ENCODE measurements at regions of chr15 and their contacts with region 1.

Region 1: DNA sequence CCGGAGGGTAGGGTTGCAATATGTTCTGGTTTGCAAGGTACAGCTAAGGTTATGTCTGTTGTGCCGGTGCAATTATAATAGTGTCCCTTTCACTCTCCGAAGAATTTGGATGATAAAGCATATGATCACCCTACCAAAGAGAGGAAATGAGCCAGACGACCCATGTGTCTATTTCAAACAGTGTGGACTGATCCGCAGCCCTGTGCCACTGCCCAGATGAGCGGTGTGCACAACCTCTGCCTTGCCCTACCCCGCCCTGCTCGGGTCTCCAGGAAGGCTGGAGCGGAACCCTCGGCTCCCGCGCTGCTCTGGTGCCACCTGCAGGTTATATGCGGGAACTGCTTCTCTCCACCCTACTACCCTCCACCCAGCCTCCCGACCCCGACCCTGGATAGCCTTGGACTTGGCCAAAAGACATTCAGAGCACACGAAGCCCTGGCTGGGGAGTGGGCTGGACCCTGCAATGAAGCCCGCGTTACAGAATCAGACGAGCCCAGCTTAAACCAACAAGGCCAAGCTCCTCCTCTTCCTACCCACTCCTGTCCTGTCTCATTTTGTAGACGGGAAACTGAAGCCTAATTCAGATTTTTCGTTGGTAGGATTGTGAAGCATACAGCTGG is 68.4 kb upstream of the CHRNB4 start:
- DNase-seq: peak; percentile 92
- H3K4me3 ChIP-seq: peak overlapping the region in 1 of 8 donors; percentile 56
- H3K27ac ChIP-seq: no peak overlapping the region
- H3K4me1 ChIP-seq: peaks cover 0 to 11% (median 10%) of the 10 kb centered on the region in 6 donors
- H3K27me3 ChIP-seq: peaks cover 0 to 19% (median 0%) of the 10 kb centered on the region in 7 donors
- CTCF ChIP-seq: peak; percentile 61 to 92 (median 86)
- POLR2A ChIP-seq: no peak

Region 2: DNA sequence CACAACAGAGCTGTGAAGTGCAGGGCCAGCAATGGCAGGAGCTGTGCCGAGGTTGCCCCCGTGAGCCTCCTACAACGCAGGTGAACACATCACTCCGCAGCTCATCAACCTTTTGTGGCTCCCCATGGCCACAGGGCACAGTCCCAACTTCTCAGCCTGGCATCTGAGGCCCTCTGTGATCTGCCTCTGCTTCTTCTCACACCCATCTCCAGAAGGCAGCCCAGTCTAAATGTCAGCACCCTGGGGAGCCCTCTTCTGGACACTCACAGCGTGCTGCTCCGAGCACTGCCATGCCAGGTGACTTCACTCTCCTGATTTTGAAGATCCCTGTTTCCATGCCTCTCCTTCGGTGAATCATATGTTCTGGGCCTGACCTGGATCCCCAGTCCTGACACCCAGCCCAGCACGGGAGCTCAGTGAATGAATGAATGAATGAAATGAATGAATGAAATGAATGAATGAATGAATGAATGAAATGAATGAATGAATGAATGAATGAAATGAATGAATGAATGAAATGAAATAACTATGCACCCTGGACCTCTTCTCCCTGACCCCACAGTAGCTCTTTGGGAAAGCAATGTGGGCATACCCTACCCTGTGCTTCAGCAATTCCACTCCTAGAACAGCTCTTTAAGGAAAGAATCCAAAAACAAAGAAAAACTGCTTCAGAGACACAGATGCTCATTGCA is 392.1 kb before region 1 on chr15:
- intact Hi-C with region 1: no loop called
- DNase-seq: peak; percentile 27
- H3K4me3 ChIP-seq: no peak overlapping the region
- H3K27ac ChIP-seq: no peak overlapping the region
- H3K4me1 ChIP-seq: peaks cover 0 to 7% (median 0%) of the 10 kb centered on the region in 6 donors
- H3K27me3 ChIP-seq: no peaks in the 10 kb centered on the region
- CTCF ChIP-seq: no peak
- POLR2A ChIP-seq: no peak

Region 3: GRCh38 chr15:78638658-78639314 is 70.6 kb before region 1 on chr15:
- intact Hi-C with region 1: loop called (anchors 5 kb)
- DNase-seq: no peak
- H3K4me3 ChIP-seq: no peak overlapping the region
- H3K27ac ChIP-seq: no peak overlapping the region
- H3K4me1 ChIP-seq: peaks cover 0 to 19% (median 14%) of the 10 kb centered on the region in 6 donors
- H3K27me3 ChIP-seq: peaks cover 0 to 24% (median 10%) of the 10 kb centered on the region in 7 donors
- CTCF ChIP-seq: peak; percentile 9 to 81 (median 67)
- POLR2A ChIP-seq: no peak